Heart right ventricle (tissue), 16 donors: ENCODE measurements at regions of chr13 and their contacts with region 1.

Region 1: GRCh38 chr13:100235311-100235901 is 146.5 kb downstream of the PCCA start:
- DNase-seq: peak in 1 of 2 donors; percentile 31
- ATAC-seq: peak in 1 of 8 donors; percentile 41
- H3K4me3 ChIP-seq: no peak overlapping the region
- H3K27ac ChIP-seq: no peak overlapping the region
- H3K4me1 ChIP-seq: peaks cover 0 to 33% (median 26%) of the 10 kb centered on the region in 9 donors
- H3K27me3 ChIP-seq: no peaks in the 10 kb centered on the region
- CTCF ChIP-seq: peak; percentile 15 to 76 (median 66)

Region 2: DNA sequence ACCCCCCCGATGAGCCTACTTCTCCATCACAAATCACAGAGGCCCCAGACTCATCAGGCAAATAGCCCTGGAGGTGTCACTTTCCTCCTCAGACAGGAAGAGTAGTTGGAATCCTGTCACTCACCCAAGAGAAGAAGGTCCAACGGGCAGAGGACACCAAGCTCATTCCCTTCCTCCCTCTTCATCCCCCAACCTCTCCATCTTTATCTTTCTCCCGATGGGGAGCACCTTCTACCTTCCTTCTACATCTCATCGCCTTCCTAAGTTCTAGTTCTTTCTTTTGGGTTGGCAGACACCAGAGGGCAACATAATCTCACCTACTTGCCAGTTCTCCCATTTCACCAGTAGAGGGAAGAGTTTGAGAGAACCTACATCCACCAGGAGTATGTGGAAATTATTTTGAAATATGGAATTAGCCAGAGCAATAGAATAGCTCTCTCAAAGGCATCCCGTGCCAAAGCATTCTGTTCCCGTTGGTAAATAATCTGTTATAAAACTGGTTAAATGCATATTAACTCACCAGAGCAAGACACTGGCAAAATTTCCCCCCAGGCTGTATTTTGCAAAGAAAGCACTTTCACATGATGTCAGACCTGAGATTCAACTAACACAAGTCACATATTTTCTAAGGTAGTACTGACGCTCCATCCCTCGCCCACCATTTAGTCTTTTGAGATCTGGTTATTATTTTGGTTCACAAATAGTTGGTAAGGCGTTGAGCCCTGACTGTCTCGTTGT is 318.9 kb before region 1 on chr13:
- intact Hi-C with region 1: loop called in 9 of 10 experiments (anchors 1 to 10 kb)
- DNase-seq: peak in 1 of 2 donors; percentile 19
- ATAC-seq: peak in 7 of 8 donors; percentile 51 to 70 (median 66)
- H3K4me3 ChIP-seq: no peak overlapping the region
- H3K27ac ChIP-seq: no peak overlapping the region
- H3K4me1 ChIP-seq: no peaks in the 10 kb centered on the region
- H3K27me3 ChIP-seq: peaks cover 0 to 52% (median 31%) of the 10 kb centered on the region in 7 donors
- CTCF ChIP-seq: peak; percentile 52 to 93 (median 82)

Region 3: GRCh38 chr13:99959538-99960230 is 275.7 kb before region 1 on chr13:
- intact Hi-C with region 1: no loop called
- DNase-seq: no peak
- ATAC-seq: no peak
- H3K4me3 ChIP-seq: peak overlapping the region in 3 of 10 donors; percentile 6 to 26 (median 13)
- H3K27ac ChIP-seq: no peak overlapping the region
- H3K4me1 ChIP-seq: peaks cover 15 to 40% (median 37%) of the 10 kb centered on the region in 9 donors
- H3K27me3 ChIP-seq: peaks cover 47 to 100% (median 100%) of the 10 kb centered on the region in 7 donors
- CTCF ChIP-seq: no peak

Region 4: DNA sequence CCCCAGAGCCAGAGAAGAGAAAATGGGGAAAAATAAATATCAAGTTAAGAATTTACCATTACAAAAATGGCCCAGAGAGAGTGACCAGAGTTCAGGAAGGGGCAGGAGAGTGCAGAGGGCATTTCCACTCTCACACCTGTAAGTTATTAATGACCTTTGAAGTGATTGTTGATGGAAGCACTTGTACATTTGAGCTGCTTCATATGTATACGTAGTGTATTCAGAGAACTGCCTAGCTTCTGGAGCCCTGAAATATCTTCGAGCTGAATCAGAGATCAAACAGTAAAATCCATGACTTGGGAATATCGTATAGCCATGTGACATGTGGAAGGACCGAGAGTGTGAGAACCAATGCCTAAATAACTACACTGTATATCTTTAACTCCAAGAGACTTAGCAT is 195.7 kb before region 1 on chr13:
- intact Hi-C with region 1: loop called in 1 of 10 experiments (anchors 10 kb)
- DNase-seq: no peak
- ATAC-seq: no peak
- H3K4me3 ChIP-seq: no peak overlapping the region
- H3K27ac ChIP-seq: no peak overlapping the region
- H3K4me1 ChIP-seq: no peaks in the 10 kb centered on the region
- H3K27me3 ChIP-seq: peaks cover 0 to 20% (median 5%) of the 10 kb centered on the region in 7 donors
- CTCF ChIP-seq: no peak

Region 5: DNA sequence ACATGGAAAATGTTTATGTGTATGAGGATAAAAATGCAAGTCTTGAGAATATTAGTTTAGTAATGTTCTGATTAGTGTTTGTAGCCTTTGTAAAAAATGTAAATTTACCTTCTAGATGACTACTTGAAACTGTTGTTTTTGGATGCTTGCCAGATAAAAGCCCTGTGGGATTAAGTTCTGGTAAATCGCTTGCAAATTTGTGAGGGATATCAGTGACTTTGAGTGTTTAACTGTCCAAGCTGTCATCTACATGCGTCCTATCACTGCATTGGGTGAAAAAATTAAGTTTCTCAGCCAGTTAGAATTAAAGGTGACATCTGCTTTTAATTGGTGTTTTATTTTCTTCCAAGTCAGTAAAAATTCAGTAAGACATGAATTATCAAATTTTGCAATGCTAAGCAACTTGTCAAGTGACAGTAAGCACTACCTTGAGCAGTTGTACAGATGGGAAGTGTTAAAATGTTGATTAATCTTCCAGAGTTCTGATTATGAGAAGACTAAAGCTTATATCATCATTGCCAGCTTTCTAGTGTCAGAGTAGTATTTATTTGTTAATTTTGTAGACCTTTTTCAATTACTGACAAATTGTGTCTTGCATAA is 58.5 kb before region 1 on chr13:
- intact Hi-C with region 1: loop called in 1 of 10 experiments (anchors 10 kb)
- DNase-seq: peak in 1 of 2 donors; percentile 11
- ATAC-seq: no peak
- H3K4me3 ChIP-seq: no peak overlapping the region
- H3K27ac ChIP-seq: no peak overlapping the region
- H3K4me1 ChIP-seq: peaks cover 0 to 15% (median 7%) of the 10 kb centered on the region in 9 donors
- H3K27me3 ChIP-seq: no peaks in the 10 kb centered on the region
- CTCF ChIP-seq: no peak

Region 6: DNA sequence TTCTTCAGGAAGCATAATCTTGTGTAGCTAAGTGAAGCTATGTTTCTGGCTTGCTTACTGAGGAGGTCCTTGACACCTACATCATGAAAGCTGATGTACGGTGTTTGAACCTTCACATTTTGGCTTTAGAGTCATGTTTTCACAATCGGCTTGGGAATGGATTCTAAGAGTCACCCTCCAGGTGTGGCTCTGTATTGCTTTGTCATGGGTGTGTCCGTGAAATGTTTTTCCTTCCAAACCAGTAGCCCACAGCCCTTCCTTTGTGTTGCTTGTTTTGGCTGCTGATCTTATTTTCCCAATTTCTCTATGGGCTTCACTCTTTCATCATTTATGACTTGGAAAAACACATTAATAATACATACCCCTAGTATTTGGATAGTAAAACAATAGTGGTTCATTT is 112.5 kb after region 1 on chr13:
- intact Hi-C with region 1: no loop called
- DNase-seq: no peak
- ATAC-seq: peak in 2 of 8 donors; percentile 48 to 64
- H3K4me3 ChIP-seq: no peak overlapping the region
- H3K27ac ChIP-seq: no peak overlapping the region
- H3K4me1 ChIP-seq: peaks cover 0 to 6% (median 0%) of the 10 kb centered on the region in 9 donors
- H3K27me3 ChIP-seq: no peaks in the 10 kb centered on the region
- CTCF ChIP-seq: no peak

Region 7: GRCh38 chr13:100710176-100710575 is 474.8 kb after region 1 on chr13:
- intact Hi-C with region 1: no loop called
- DNase-seq: no peak
- ATAC-seq: no peak
- H3K4me3 ChIP-seq: no peak overlapping the region
- H3K27ac ChIP-seq: no peak overlapping the region
- H3K4me1 ChIP-seq: no peaks in the 10 kb centered on the region
- H3K27me3 ChIP-seq: peaks cover 0 to 10% (median 0%) of the 10 kb centered on the region in 7 donors
- CTCF ChIP-seq: no peak